ENCODE measurements at regions of chr6 and their contacts with region 1.

Region 1: DNA sequence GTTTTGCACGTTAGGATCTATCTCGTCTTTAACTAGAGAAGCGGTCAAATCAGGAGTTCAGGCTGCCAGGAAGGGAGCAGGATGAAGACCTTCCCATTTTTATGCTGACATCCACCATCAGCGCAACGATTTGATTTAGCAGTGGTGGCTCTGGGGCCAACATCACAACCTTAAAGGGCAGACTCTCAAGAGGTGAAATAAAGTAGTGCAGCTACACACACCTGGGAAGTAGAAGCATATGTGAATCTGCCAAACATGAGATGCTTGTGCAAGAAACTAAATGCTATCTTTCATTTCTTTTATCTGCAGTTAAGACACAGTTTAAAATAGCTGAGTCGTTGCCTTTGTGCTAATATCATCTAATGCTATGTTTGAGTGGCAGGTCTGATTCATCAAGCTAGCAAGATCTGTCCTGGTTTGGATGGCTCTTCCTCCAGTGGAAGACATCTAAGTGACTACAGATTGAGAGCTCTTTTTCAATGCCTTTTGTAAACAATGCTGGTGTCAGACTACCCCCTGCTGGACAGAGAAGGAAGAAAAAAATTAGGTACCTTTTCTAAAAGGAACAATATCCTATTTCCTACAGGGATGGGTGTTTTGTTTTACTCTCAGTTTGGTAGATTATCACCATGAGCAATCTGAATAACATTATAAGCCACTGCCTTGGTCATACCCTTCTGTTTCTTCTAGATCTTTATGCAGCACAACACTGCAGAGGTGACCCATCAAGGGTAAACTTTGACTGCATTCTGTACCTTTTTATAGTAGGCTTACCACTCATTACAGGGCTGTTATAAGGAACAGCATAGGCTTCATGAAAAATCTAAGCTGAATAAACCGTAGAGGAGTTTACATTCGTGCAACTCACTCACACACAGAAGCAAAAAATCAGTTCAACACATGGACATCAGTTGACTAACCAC is 171.6 kb upstream of the FBXL4 start:
- DNase-seq: peak in 5 of 9 donors; percentile 21 to 39 (median 30)
- ATAC-seq: no peak
- H3K4me3 ChIP-seq: no peak overlapping the region
- H3K4me3 Mint-ChIP-seq: no peak overlapping the region
- H3K27ac ChIP-seq: no peak overlapping the region
- H3K27ac Mint-ChIP-seq: no peak overlapping the region
- H3K4me1 ChIP-seq: no peaks in the 10 kb centered on the region
- H3K4me1 Mint-ChIP-seq: no peaks in the 10 kb centered on the region
- H3K27me3 ChIP-seq: peaks cover 0 to 4% of the 10 kb centered on the region in 2 donors
- H3K27me3 Mint-ChIP-seq: peaks cover 18 to 47% (median 25%) of the 10 kb centered on the region in 5 donors

Region 2: DNA sequence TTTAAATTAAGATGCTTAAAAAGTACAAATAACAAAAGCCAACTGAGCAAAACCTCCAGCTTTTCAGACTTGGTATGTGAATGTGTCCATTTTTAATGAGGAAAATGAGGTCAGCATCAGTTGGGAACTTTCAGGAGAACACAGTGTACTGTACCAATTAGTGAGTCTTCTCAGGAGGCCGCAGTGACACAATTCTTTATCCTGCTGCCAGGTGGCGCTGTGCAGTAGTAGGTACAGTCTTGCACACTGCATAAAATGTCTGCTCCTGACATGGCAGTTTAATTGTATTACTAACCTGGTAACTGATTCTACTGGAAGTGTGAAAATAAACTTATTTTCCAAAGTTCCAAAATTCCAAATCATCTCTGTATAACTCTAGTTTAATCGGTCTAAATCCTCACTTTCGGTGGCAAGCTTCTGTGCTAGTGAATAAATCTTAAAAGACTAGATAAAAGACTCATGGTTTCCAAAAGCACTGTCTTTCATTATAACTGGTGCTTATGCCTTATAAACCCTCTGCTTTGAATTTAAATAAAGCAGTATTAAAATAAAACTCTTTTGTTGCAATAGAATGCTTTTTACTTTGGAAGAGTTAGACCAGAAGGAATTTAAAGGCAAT is 1621.5 kb before region 1 on chr6:
- CTCF ChIA-PET with region 1: interaction called, 7 read pairs
- POLR2A ChIA-PET with region 1: no interaction called
- intact Hi-C with region 1: loop called in 1 of 2 experiments (anchors 1 kb)
- DNase-seq: peak; percentile 12 to 54 (median 45)
- ATAC-seq: peak; percentile 90
- H3K4me3 ChIP-seq: no peak overlapping the region
- H3K4me3 Mint-ChIP-seq: no peak overlapping the region
- H3K27ac ChIP-seq: no peak overlapping the region
- H3K27ac Mint-ChIP-seq: no peak overlapping the region
- H3K4me1 ChIP-seq: no peaks in the 10 kb centered on the region
- H3K4me1 Mint-ChIP-seq: no peaks in the 10 kb centered on the region
- H3K27me3 ChIP-seq: no peaks in the 10 kb centered on the region
- H3K27me3 Mint-ChIP-seq: peaks cover 6 to 21% (median 14%) of the 10 kb centered on the region in 5 donors

Region 3: GRCh38 chr6:98947351-98948292 is 171.7 kb before region 1 on chr6 and contains the start of gene FBXL4:
- CTCF ChIA-PET with region 1: no interaction called
- POLR2A ChIA-PET with region 1: no interaction called
- intact Hi-C with region 1: no loop called
- DNase-seq: peak; percentile 68 to 87 (median 79)
- ATAC-seq: peak; percentile 93
- H3K4me3 ChIP-seq: peak within 1 kb of the TSS; percentile 88
- H3K4me3 Mint-ChIP-seq: peak within 1 kb of the TSS; percentile 85 to 99 (median 96)
- H3K27ac ChIP-seq: peak within 1 kb of the TSS; percentile 70
- H3K27ac Mint-ChIP-seq: peak within 1 kb of the TSS; percentile 90 to 97 (median 94)
- H3K4me1 ChIP-seq: peaks cover 12 to 18% of the 10 kb centered on the region in 2 donors
- H3K4me1 Mint-ChIP-seq: peaks cover 23 to 46% (median 40%) of the 10 kb centered on the region in 7 donors
- H3K27me3 ChIP-seq: no peaks in the 10 kb centered on the region
- H3K27me3 Mint-ChIP-seq: peaks cover 0 to 29% (median 0%) of the 10 kb centered on the region in 5 donors
- total RNA-seq, gene FBXL4: 12.0 to 24.3 (median 13.5) TPM

Region 4: GRCh38 chr6:99080191-99080590 is 39.2 kb before region 1 on chr6:
- CTCF ChIA-PET with region 1: no interaction called
- POLR2A ChIA-PET with region 1: no interaction called
- intact Hi-C with region 1: no loop called
- DNase-seq: no peak
- ATAC-seq: no peak
- H3K4me3 ChIP-seq: no peak overlapping the region
- H3K4me3 Mint-ChIP-seq: no peak overlapping the region
- H3K27ac ChIP-seq: no peak overlapping the region
- H3K27ac Mint-ChIP-seq: no peak overlapping the region
- H3K4me1 ChIP-seq: no peaks in the 10 kb centered on the region
- H3K4me1 Mint-ChIP-seq: no peaks in the 10 kb centered on the region
- H3K27me3 ChIP-seq: no peaks in the 10 kb centered on the region
- H3K27me3 Mint-ChIP-seq: peaks cover 6 to 54% (median 22%) of the 10 kb centered on the region in 5 donors

Region 5: GRCh38 chr6:99143108-99143861 is 23.9 kb after region 1 on chr6:
- CTCF ChIA-PET with region 1: no interaction called
- POLR2A ChIA-PET with region 1: no interaction called
- intact Hi-C with region 1: no loop called
- DNase-seq: no peak
- ATAC-seq: no peak
- H3K4me3 ChIP-seq: no peak overlapping the region
- H3K4me3 Mint-ChIP-seq: no peak overlapping the region
- H3K27ac ChIP-seq: no peak overlapping the region
- H3K27ac Mint-ChIP-seq: no peak overlapping the region
- H3K4me1 ChIP-seq: no peaks in the 10 kb centered on the region
- H3K4me1 Mint-ChIP-seq: peaks cover 0 to 1% (median 0%) of the 10 kb centered on the region in 7 donors
- H3K27me3 ChIP-seq: no peaks in the 10 kb centered on the region
- H3K27me3 Mint-ChIP-seq: peaks cover 3 to 20% (median 14%) of the 10 kb centered on the region in 5 donors

Region 6: GRCh38 chr6:99189823-99190721 is 70.7 kb after region 1 on chr6:
- CTCF ChIA-PET with region 1: no interaction called
- POLR2A ChIA-PET with region 1: no interaction called
- intact Hi-C with region 1: no loop called
- DNase-seq: peak in 1 of 9 donors; percentile 24
- ATAC-seq: no peak
- H3K4me3 ChIP-seq: no peak overlapping the region
- H3K4me3 Mint-ChIP-seq: no peak overlapping the region
- H3K27ac ChIP-seq: no peak overlapping the region
- H3K27ac Mint-ChIP-seq: no peak overlapping the region
- H3K4me1 ChIP-seq: no peaks in the 10 kb centered on the region
- H3K4me1 Mint-ChIP-seq: peaks cover 0 to 4% (median 0%) of the 10 kb centered on the region in 7 donors
- H3K27me3 ChIP-seq: no peaks in the 10 kb centered on the region
- H3K27me3 Mint-ChIP-seq: peaks cover 9 to 32% (median 21%) of the 10 kb centered on the region in 5 donors